Activated T-helper 2 cell treated with anti-CD3 and anti-CD28 coated beads, Interferon-gamma antibody, Interleukin-2, Interleukin-4, amounts not matched to agents 10 μg/mL and 5 μg/mL and 100 μg/mL, durations not matched to agents 14 hours and 24 hours and 36 hours (primary cell): ENCODE measurements at regions of chr1 and their contacts with region 1.

Region 1: GRCh38 chr1:162756523-162756922 is 34.0 kb upstream of the HSD17B7 start:
- DNase-seq: no peak
- H3K4me3 Mint-ChIP-seq: no peak overlapping the region
- H3K27ac Mint-ChIP-seq: no peak overlapping the region
- H3K4me1 Mint-ChIP-seq: no peaks in the 10 kb centered on the region
- H3K27me3 Mint-ChIP-seq: peaks cover 2% of the 10 kb centered on the region

Region 2: DNA sequence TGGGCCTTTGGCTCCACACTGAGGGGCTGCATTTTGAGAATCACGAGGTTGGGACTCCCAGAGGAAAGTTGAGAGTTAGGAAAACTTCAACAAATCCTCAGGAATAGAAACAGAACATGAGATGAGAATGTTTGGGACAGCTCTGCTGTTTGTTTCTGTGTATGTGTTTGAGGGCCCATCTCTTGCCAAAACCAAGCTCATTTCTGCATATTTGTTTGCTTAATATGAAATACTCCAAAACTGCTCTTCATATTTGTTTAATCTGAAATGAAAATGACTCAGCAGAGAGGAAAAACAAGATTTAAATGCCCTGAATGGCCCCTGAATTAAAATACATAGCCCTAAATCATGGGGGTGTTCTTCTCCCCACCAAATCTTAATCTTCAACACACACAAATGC is 46.2 kb before region 1 on chr1:
- intact Hi-C with region 1: no loop called
- DNase-seq: no peak
- H3K4me3 Mint-ChIP-seq: no peak overlapping the region
- H3K27ac Mint-ChIP-seq: no peak overlapping the region
- H3K4me1 Mint-ChIP-seq: peaks cover 13% of the 10 kb centered on the region
- H3K27me3 Mint-ChIP-seq: peaks cover 11% of the 10 kb centered on the region

Region 3: DNA sequence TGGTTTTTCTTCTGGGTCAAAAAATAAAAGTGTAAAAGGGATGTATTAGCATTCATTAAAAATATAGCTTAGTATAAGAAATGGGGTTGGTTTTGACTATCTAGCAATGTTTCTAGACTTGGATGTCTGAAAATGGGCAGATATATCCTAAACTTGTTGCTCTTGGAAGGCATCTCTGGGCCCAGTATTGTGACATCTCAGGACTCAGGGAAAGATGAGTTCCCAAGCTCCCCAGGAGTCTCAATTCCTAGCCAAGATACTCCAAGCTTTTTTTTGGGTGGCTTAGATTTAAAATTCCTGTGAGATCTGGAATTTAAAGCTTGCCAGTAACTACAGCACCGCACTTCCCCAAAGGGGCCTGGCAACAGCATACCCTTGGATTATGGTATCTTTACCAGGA is 22.5 kb after region 1 on chr1:
- intact Hi-C with region 1: loop called (anchors 1 kb)
- DNase-seq: no peak
- H3K4me3 Mint-ChIP-seq: no peak overlapping the region
- H3K27ac Mint-ChIP-seq: no peak overlapping the region
- H3K4me1 Mint-ChIP-seq: no peaks in the 10 kb centered on the region
- H3K27me3 Mint-ChIP-seq: peaks cover 37% of the 10 kb centered on the region

Region 4: DNA sequence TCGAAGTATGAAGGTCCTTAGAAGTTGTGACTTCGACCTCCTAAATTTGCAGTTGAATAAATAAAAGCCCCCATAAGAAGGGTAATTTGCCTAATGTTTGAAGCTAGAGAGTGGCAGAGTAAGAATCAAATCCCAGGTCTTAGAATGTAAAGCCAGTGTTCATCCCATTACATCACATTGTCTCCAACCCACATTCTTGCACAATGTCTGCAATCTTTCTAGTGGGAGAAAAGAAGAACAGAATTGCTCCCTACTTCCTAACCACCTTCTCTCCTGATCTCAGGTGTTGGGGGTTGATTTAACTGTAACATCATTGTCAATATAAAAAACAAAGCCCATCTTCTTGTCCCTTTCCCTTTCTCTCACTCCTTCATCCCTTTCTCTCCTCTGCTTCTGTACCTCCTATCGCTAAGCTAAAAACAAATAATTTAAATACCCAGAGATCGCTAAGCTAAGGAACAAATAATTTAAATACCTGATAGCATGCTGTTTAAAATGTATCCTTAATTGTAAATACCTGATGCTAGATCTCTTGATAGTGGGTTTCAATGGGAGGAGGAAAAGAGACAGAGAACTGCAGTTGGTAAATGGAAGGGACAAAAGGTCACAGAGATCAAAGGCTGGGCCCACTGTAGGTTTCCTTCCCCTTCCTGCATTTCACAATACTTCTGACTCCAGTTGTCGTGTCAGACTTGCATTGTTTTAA is 136.5 kb after region 1 on chr1:
- intact Hi-C with region 1: no loop called
- DNase-seq: no peak
- H3K4me3 Mint-ChIP-seq: no peak overlapping the region
- H3K27ac Mint-ChIP-seq: no peak overlapping the region
- H3K4me1 Mint-ChIP-seq: no peaks in the 10 kb centered on the region
- H3K27me3 Mint-ChIP-seq: peaks cover 6% of the 10 kb centered on the region

Region 5: DNA sequence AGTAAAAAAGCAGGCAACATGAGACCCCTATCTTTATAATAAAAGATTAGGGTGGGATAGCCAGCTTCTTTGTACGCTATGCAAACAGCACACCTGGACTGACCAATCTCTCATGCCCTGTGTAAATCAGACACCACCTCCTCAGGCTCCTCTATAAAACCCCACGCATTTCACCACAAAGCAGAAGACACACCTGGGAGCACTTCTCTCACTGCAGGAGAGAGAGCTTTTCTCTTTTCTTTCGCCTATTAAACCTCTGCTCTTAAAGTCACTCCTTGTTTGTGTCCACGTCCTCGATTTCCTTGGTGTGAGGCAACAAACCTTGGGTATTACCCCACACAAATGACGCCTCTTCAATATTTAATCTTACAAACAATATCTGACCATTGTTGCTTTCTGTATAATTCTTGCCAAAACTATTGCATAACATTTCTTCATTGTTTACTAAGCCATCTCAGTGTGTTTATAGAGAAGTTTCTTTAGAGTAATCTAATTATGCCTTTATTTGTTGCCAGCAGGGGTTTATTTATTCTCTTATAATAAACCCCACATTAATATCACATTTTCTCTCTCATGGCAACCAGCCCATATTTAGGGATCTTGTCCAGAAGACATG is 533.6 kb after region 1 on chr1:
- intact Hi-C with region 1: no loop called
- DNase-seq: no peak
- H3K4me3 Mint-ChIP-seq: no peak overlapping the region
- H3K27ac Mint-ChIP-seq: no peak overlapping the region
- H3K4me1 Mint-ChIP-seq: peaks cover 11% of the 10 kb centered on the region
- H3K27me3 Mint-ChIP-seq: no peaks in the 10 kb centered on the region